B cell (primary cell): ENCODE measurements at regions of chr12 and their contacts with region 1.

Region 1: GRCh38 chr12:12999959-13000615 is at the start of gene HEBP1:
- DNase-seq: peak; percentile 96
- ATAC-seq: peak; percentile 89
- H3K4me3 ChIP-seq: peak within 1 kb of the TSS; percentile 63 to 92 (median 81)
- H3K4me3 Mint-ChIP-seq: peak within 1 kb of the TSS; percentile 90
- H3K27ac ChIP-seq: peak within 1 kb of the TSS; percentile 61 to 63
- H3K27ac Mint-ChIP-seq: peak within 1 kb of the TSS; percentile 80
- H3K4me1 ChIP-seq: peaks cover 11 to 20% of the 10 kb centered on the region in 2 donors
- H3K4me1 Mint-ChIP-seq: peaks cover 29% of the 10 kb centered on the region
- H3K27me3 ChIP-seq: peaks cover 0 to 3% (median 0%) of the 10 kb centered on the region in 4 experiments
- H3K27me3 Mint-ChIP-seq: no peaks in the 10 kb centered on the region
- CTCF ChIP-seq: no peak
- total RNA-seq, gene HEBP1: 11.2 and 14.5 TPM in 2 replicates

Region 2: DNA sequence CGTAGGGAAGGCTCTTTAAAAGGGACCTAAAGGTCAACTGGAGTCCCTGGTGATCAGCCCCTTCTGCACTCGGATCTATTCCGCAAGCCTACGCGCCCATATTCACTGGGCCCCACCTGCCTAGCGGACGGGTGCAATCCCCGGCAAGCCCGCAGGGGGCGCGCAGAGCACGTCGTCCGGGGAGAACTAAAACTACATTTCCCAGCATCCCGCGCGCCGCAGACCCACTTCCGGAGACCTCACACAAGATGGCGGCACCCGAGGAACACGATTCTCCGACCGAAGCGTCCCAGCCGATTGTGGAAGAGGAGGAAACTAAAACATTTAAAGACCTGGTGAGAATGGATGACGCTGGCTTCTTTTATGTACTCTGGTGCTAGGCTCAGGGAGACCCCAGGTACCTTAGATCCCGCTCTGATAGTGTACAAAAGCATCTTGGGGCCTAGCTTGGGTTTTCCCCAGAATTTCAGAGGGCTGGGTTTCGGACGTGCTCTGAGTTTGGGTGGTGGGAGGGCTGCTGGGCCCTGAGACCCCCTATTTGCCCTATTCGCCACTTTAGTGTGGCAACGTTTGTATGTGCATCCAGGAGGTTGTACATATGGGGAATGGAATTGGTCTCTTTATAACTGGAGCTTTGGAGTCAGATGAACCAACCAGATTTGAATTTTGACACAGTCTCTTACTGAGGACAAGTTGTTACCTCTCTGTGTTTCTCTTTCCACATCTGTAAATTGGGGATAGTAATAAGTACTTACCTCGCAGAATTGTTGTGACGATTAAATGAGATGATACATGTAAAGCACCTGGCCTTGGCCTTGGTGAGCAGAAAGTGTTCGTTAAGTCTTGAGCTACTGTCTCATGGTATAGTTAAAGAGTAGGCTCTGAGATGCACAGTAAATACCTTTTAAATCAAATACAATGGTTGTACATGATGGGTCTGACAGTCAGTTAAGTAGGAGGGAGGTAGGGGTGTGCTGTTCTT is 186.7 kb before region 1 on chr12 and contains the start of gene DDX47:
- CTCF ChIA-PET with region 1: interaction called, 3 read pairs
- POLR2A ChIA-PET with region 1: no interaction called
- intact Hi-C with region 1: loop called (anchors 1 kb)
- DNase-seq: peak; percentile 96
- ATAC-seq: peak; percentile 75
- H3K4me3 ChIP-seq: peak within 1 kb of the TSS; percentile 81 to 100 (median 94)
- H3K4me3 Mint-ChIP-seq: peak within 1 kb of the TSS; percentile 91
- H3K27ac ChIP-seq: peak within 1 kb of the TSS; percentile 86 to 94
- H3K27ac Mint-ChIP-seq: peak within 1 kb of the TSS; percentile 91
- H3K4me1 ChIP-seq: peaks cover 24 to 41% of the 10 kb centered on the region in 2 donors
- H3K4me1 Mint-ChIP-seq: peaks cover 66% of the 10 kb centered on the region
- H3K27me3 ChIP-seq: no peaks in the 10 kb centered on the region
- H3K27me3 Mint-ChIP-seq: no peaks in the 10 kb centered on the region
- CTCF ChIP-seq: peak; percentile 92
- total RNA-seq, gene DDX47: 89.1 and 93.7 TPM in 2 replicates

Region 3: GRCh38 chr12:12916135-12916944 is 83.7 kb before region 1 on chr12:
- CTCF ChIA-PET with region 1: no interaction called
- POLR2A ChIA-PET with region 1: no interaction called
- intact Hi-C with region 1: loop called (anchors 5 kb)
- DNase-seq: peak; percentile 88
- ATAC-seq: peak; percentile 97
- H3K4me3 ChIP-seq: peak overlapping the region in 1 of 5 experiments; percentile 9
- H3K4me3 Mint-ChIP-seq: no peak overlapping the region
- H3K27ac ChIP-seq: no peak overlapping the region
- H3K27ac Mint-ChIP-seq: no peak overlapping the region
- H3K4me1 ChIP-seq: peaks cover 5 to 9% of the 10 kb centered on the region in 2 donors
- H3K4me1 Mint-ChIP-seq: peaks cover 6% of the 10 kb centered on the region
- H3K27me3 ChIP-seq: peaks cover 0 to 16% (median 6%) of the 10 kb centered on the region in 4 experiments
- H3K27me3 Mint-ChIP-seq: peaks cover 17% of the 10 kb centered on the region
- CTCF ChIP-seq: peak; percentile 94

Region 4: DNA sequence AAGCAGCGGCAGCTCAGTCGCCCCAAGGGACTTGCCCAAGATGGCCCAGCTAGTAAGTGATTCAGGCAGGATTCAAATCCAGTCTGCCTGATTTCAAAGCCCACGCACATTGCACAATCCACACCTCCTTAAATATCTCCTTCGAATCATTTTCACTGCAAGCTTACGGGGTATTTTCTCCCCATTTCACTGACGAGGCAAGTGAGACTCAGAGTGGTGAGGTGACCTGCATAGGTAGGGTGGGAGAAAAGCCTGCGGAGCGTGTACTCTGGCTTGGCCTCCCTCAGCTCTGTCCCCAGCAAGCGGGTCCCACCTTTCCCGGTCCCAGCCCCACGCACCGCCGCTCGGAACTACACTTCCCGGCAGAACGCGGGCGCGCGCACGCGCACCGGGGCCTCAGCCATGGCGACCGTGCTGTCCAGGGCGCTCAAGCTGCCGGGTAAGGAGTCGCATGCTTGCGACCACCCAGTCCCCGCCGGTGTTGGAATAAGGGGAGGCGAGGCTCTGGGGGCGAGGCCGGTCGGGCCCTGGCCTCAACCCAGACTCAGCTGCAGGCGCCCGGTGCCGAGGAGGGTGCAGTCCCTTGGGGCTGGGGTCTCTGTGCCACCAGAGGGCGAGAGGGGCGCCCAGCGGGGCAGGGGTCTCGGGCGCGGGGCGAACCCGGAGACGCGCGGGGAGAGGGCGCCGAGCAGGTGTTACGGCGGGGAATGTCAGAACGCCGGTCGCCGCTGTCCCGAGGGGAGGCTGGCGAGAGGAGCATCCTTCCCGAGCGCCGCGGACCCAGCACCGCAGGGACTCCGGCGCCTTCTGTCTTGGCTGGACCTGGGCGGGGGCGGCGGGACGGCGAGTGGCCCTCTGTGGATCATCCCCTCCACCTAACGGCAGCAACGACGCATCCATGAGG is 44.2 kb after region 1 on chr12 and contains the start of gene FAM234B:
- CTCF ChIA-PET with region 1: no interaction called
- POLR2A ChIA-PET with region 1: no interaction called
- intact Hi-C with region 1: loop called (anchors 1 kb)
- DNase-seq: peak; percentile 76
- ATAC-seq: peak; percentile 96
- H3K4me3 ChIP-seq: peak within 1 kb of the TSS; percentile 51 to 98 (median 88)
- H3K4me3 Mint-ChIP-seq: peak within 1 kb of the TSS; percentile 90
- H3K27ac ChIP-seq: peak within 1 kb of the TSS in 1 of 2 donors; percentile 77
- H3K27ac Mint-ChIP-seq: peak within 1 kb of the TSS; percentile 53
- H3K4me1 ChIP-seq: peaks cover 22% of the 10 kb centered on the region in 2 donors
- H3K4me1 Mint-ChIP-seq: peaks cover 25% of the 10 kb centered on the region
- H3K27me3 ChIP-seq: no peaks in the 10 kb centered on the region
- H3K27me3 Mint-ChIP-seq: no peaks in the 10 kb centered on the region
- CTCF ChIP-seq: no peak
- total RNA-seq, gene FAM234B: 7.7 and 8.2 TPM in 2 replicates

Region 5: GRCh38 chr12:13100882-13101769 is 101.0 kb after region 1 on chr12:
- CTCF ChIA-PET with region 1: interaction called, 4 read pairs
- POLR2A ChIA-PET with region 1: no interaction called
- intact Hi-C with region 1: loop called (anchors 1 kb)
- DNase-seq: peak; percentile 97
- ATAC-seq: peak; percentile 77
- H3K4me3 ChIP-seq: peak overlapping the region; percentile 39 to 82 (median 71)
- H3K4me3 Mint-ChIP-seq: peak overlapping the region; percentile 88
- H3K27ac ChIP-seq: peak overlapping the region; percentile 97 to 99
- H3K27ac Mint-ChIP-seq: peak overlapping the region; percentile 96
- H3K4me1 ChIP-seq: peaks cover 52 to 63% of the 10 kb centered on the region in 2 donors
- H3K4me1 Mint-ChIP-seq: peaks cover 62% of the 10 kb centered on the region
- H3K27me3 ChIP-seq: no peaks in the 10 kb centered on the region
- H3K27me3 Mint-ChIP-seq: no peaks in the 10 kb centered on the region
- CTCF ChIP-seq: no peak

Region 6: DNA sequence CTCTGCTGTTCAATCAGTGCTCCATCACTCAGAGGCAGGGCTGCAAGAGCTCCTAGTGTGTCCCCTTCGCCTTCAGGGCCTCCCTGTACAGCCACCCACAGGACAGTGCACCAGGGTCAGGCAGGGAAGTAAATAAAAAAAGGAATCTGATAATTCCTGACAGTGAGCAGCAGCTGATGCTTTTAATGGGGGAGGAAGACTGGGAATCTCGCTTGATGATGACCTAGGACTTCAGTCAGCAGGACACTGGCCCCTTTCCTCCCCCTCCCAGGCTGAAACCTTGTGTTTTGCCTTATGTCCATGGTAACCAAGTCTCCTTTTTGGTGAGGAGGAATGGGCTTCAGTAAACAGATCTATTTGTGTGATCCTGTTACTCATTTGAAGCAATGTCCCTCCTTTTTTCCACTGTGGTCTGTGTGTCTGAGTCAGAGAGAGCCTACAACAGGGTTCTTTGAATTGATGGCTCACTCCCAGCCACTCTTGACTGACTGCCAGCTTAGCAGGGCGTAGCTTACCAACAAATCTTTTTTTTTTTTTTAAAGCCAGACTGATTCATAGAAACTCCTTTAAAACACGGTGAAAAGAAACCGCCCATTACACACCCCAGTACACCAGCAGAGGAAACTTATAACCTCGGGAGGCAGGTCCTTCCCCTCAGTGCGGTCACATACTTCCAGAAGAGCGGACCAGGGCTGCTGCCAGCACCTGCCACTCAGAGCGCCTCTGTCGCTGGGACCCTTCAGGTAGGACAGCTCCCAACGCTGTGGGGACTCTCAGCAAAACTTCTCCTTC is 196.2 kb after region 1 on chr12 and contains the start of gene EMP1:
- CTCF ChIA-PET with region 1: no interaction called
- POLR2A ChIA-PET with region 1: no interaction called
- intact Hi-C with region 1: loop called (anchors 2 kb)
- DNase-seq: peak; percentile 68
- ATAC-seq: peak; percentile 90
- H3K4me3 ChIP-seq: peak within 1 kb of the TSS in 4 of 5 experiments; percentile 3 to 61 (median 44)
- H3K4me3 Mint-ChIP-seq: peak within 1 kb of the TSS; percentile 80
- H3K27ac ChIP-seq: peak within 1 kb of the TSS in 1 of 2 donors; percentile 13
- H3K27ac Mint-ChIP-seq: peak within 1 kb of the TSS; percentile 65
- H3K4me1 ChIP-seq: peaks cover 15 to 19% of the 10 kb centered on the region in 2 donors
- H3K4me1 Mint-ChIP-seq: peaks cover 30% of the 10 kb centered on the region
- H3K27me3 ChIP-seq: peaks cover 0 to 16% (median 3%) of the 10 kb centered on the region in 4 experiments
- H3K27me3 Mint-ChIP-seq: peaks cover 55% of the 10 kb centered on the region
- CTCF ChIP-seq: no peak
- total RNA-seq, gene EMP1: 0.64 and 0.83 TPM in 2 replicates

Region 7: GRCh38 chr12:13534645-13535398 is 534.7 kb after region 1 on chr12:
- CTCF ChIA-PET with region 1: no interaction called
- POLR2A ChIA-PET with region 1: no interaction called
- intact Hi-C with region 1: loop called (anchors 5 kb)
- DNase-seq: peak; percentile 50
- ATAC-seq: no peak
- H3K4me3 ChIP-seq: no peak overlapping the region
- H3K4me3 Mint-ChIP-seq: peak overlapping the region; percentile 30
- H3K27ac ChIP-seq: no peak overlapping the region
- H3K27ac Mint-ChIP-seq: no peak overlapping the region
- H3K4me1 ChIP-seq: peaks cover 43 to 44% of the 10 kb centered on the region in 2 donors
- H3K4me1 Mint-ChIP-seq: peaks cover 45% of the 10 kb centered on the region
- H3K27me3 ChIP-seq: no peaks in the 10 kb centered on the region
- H3K27me3 Mint-ChIP-seq: no peaks in the 10 kb centered on the region
- CTCF ChIP-seq: peak; percentile 64